Activated naive CD4-positive, alpha-beta T cell treated with anti-CD3 and anti-CD28 coated beads for 36 hours (primary cell): ENCODE measurements at regions of chr6 and their contacts with region 1.

Region 1: DNA sequence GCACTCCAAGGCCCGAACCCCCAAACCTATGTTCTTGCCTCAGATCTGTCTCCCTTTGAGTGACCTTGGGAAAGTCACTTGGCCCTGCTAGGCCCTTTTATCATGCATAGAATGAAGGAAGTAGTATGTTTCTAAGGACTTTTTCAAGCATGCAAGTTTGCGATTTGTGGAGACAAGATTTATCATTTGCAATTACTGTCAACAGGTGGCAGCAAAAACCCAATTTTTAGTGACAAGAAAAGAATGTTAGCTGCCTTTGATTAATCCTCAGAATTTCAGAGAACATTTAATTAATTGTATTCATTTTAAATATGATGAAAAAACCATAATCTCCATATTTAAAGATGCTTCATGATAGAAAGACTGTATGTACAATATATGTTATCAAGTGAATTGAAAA is 28.3 kb upstream of the PREP start:
- DNase-seq: peak; percentile 10
- H3K4me3 Mint-ChIP-seq: no peak overlapping the region
- H3K27ac Mint-ChIP-seq: no peak overlapping the region
- H3K4me1 Mint-ChIP-seq: no peaks in the 10 kb centered on the region
- H3K27me3 Mint-ChIP-seq: peaks cover 7% of the 10 kb centered on the region

Region 2: DNA sequence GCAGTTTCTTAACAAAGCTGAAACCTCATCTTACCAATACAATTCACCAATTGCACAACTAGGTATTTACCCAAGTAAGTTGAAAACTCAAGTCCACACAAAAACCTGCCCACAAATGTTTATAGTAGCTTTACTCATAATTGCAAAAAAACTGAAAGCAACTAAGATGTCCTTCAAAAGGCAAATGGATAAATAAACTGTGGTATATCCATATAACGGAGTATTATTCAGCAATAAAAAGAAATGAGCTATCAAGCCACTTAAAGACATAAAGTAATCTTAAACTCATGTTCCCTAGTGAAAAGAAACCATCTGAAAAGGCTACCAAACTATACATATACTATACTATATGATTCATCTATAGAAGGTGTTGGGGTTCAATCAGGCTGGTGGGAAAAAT is 751.3 kb before region 1 on chr6:
- CTCF ChIA-PET with region 1: no interaction called
- intact Hi-C with region 1: no loop called
- DNase-seq: no peak
- H3K4me3 Mint-ChIP-seq: no peak overlapping the region
- H3K27ac Mint-ChIP-seq: no peak overlapping the region
- H3K4me1 Mint-ChIP-seq: peaks cover 15% of the 10 kb centered on the region
- H3K27me3 Mint-ChIP-seq: no peaks in the 10 kb centered on the region

Region 3: GRCh38 chr6:105726907-105727655 is 295.9 kb after region 1 on chr6:
- CTCF ChIA-PET with region 1: no interaction called
- intact Hi-C with region 1: loop called (anchors 5 kb)
- DNase-seq: no peak
- H3K4me3 Mint-ChIP-seq: no peak overlapping the region
- H3K27ac Mint-ChIP-seq: no peak overlapping the region
- H3K4me1 Mint-ChIP-seq: no peaks in the 10 kb centered on the region
- H3K27me3 Mint-ChIP-seq: no peaks in the 10 kb centered on the region